ENCODE measurements at regions of chr7 and their contacts with region 1.

Region 1: DNA sequence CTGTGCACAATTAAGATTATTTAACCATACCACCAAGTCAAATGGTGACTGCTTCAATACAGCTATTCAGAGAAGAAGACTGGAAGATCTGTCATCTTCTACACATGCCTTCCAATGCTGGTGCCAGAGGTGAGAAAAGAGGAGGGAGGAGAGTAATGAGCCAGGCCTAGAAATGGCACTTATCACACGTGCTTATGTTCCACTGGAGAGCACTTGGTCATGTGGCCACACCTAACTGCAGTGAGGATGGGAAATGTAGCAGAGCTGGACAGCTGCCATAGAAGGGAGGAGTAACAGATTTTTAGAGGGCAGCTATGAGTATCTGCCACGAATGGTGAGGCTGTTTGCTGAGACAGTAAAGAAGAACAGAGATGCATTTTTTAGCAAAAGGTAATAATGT is 77.1 kb downstream of the MPLKIP start:
- DNase-seq: no peak
- H3K4me3 ChIP-seq: no peak overlapping the region
- CTCF ChIP-seq: no peak

Region 2: DNA sequence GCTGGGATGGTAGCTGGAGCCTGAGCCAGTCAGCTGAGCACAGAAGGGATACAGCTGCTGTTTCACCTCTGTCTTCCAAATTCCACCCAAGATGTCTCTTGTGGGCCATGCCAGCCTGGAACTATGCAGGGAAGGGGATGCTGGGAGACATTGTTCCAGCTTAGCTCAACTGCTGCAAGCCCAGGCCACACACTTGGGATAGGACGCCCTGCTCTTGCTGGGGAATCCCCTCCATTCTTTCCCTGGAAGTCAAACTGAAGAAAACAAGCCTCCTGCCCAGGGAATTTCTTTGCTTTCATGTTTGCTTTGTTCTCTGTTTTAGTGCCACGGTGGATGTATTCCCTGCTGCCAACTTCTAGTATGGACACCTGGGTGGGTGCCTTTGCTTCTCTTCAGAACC is 162.4 kb before region 1 on chr7:
- CTCF ChIA-PET with region 1: interaction called, 197 read pairs
- POLR2A ChIA-PET with region 1: no interaction called
- DNase-seq: no peak
- H3K4me3 ChIP-seq: no peak overlapping the region
- CTCF ChIP-seq: no peak

Region 3: GRCh38 chr7:39954694-39955093 is 102.6 kb before region 1 on chr7:
- CTCF ChIA-PET with region 1: interaction called, 21 read pairs
- POLR2A ChIA-PET with region 1: no interaction called
- DNase-seq: no peak
- H3K4me3 ChIP-seq: no peak overlapping the region
- CTCF ChIP-seq: no peak

Region 4: DNA sequence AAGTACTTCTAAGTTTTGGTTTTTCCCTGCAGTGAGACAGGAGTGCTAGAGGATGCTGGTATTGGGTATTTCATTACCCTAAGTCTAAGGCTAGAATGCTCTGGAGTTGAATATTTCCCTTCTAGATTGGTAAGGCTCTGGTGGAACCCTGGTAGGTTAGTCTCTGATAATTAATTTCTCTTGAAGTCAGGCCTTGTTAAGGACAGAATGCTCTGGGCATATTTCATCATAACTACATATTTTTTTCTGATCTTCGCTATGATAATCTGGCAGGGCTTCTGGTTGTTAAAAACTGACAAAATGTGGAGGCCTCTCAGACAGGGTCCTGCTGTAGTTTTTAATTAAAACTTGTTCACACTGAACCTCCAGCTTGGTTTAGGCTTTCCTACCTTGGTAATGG is 23.5 kb before region 1 on chr7:
- CTCF ChIA-PET with region 1: interaction called, 27 read pairs
- POLR2A ChIA-PET with region 1: no interaction called
- DNase-seq: no peak
- H3K4me3 ChIP-seq: no peak overlapping the region
- CTCF ChIP-seq: no peak

Region 5: GRCh38 chr7:40072268-40072667 is 15.0 kb after region 1 on chr7:
- CTCF ChIA-PET with region 1: interaction called, 15 read pairs
- POLR2A ChIA-PET with region 1: no interaction called
- DNase-seq: no peak
- H3K4me3 ChIP-seq: no peak overlapping the region
- CTCF ChIP-seq: no peak